CD4-positive, alpha-beta memory T cell (primary cell): ENCODE measurements at regions of chr9 and their contacts with region 1.

Region 1: GRCh38 chr9:113410207-113410864 is at the starts of genes C9orf43 and POLE3:
- DNase-seq: peak; percentile 94 to 97 (median 95)
- H3K4me3 ChIP-seq: peak within 1 kb of the TSS; percentile 65 to 88
- H3K4me3 Mint-ChIP-seq: peak within 1 kb of the TSS; percentile 95 to 100 (median 98)
- H3K27ac ChIP-seq: peak within 1 kb of the TSS; percentile 84
- H3K27ac Mint-ChIP-seq: peak within 1 kb of the TSS; percentile 99 to 100 (median 99)
- H3K4me1 ChIP-seq: peaks cover 27% of the 10 kb centered on the region
- H3K4me1 Mint-ChIP-seq: peaks cover 17 to 44% (median 33%) of the 10 kb centered on the region in 4 donors
- H3K27me3 ChIP-seq: no peaks in the 10 kb centered on the region
- H3K27me3 Mint-ChIP-seq: peaks cover 2 to 3% of the 10 kb centered on the region in 2 donors
- total RNA-seq, gene C9orf43: 0.86 to 0.87 TPM
- total RNA-seq, gene POLE3: 46.9 TPM

Region 2: DNA sequence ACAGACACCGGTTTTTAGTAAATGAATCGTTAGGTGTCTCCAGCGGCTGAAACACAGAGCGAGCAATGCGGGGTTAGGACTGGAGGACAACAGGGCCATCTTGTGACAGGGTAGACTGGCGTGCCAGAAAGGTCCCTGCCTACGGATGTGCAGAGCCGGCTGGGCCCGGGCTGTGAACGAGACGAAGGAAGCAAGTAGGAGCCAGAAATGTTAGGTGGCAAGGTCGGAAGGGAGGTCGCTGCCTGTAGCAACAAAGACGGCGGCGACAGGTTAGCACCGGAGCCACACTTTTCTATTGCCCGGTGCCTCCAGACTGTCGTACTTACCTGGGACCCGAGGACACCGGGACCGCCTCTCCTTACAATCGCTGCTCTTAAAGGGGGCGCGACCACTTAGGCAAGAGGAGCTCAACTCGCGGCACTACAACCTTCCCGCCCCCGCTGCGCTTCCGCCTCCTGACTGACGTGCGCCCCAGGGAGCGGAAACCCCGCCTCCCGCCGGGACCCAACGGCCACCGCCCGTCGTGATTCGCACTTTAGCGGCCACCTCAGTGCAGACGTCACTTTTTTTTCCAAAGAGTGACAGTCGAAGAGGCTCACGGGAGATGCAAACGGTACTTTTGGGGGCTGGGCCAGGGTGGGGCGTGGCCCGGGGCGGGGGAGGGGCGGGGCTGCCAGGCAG is 692.5 kb before region 1 on chr9 and contains the start of gene INIP:
- CTCF ChIA-PET with region 1: no interaction called
- POLR2A ChIA-PET with region 1: no interaction called
- intact Hi-C with region 1: loop called (anchors 2 kb)
- DNase-seq: peak; percentile 97 to 98 (median 98)
- H3K4me3 ChIP-seq: peak within 1 kb of the TSS; percentile 78 to 95
- H3K4me3 Mint-ChIP-seq: peak within 1 kb of the TSS; percentile 93 to 99 (median 98)
- H3K27ac ChIP-seq: peak within 1 kb of the TSS; percentile 88
- H3K27ac Mint-ChIP-seq: peak within 1 kb of the TSS; percentile 94 to 99 (median 99)
- H3K4me1 ChIP-seq: peaks cover 25% of the 10 kb centered on the region
- H3K4me1 Mint-ChIP-seq: peaks cover 15 to 37% (median 26%) of the 10 kb centered on the region in 4 donors
- H3K27me3 ChIP-seq: no peaks in the 10 kb centered on the region
- H3K27me3 Mint-ChIP-seq: no peaks in the 10 kb centered on the region
- total RNA-seq, gene INIP: 25.2 to 33.4 TPM

Region 3: GRCh38 chr9:113221003-113221799 is 189.1 kb before region 1 on chr9 and contains the starts of genes FKBP15 and SLC31A1:
- CTCF ChIA-PET with region 1: no interaction called
- POLR2A ChIA-PET with region 1: interaction called, 16 read pairs
- intact Hi-C with region 1: loop called (anchors 1 kb)
- DNase-seq: peak; percentile 95 to 98 (median 97)
- H3K4me3 ChIP-seq: peak within 1 kb of the TSS; percentile 89 to 91
- H3K4me3 Mint-ChIP-seq: peak within 1 kb of the TSS; percentile 92 to 98 (median 96)
- H3K27ac ChIP-seq: peak within 1 kb of the TSS; percentile 90
- H3K27ac Mint-ChIP-seq: peak within 1 kb of the TSS; percentile 91 to 98 (median 96)
- H3K4me1 ChIP-seq: peaks cover 34% of the 10 kb centered on the region
- H3K4me1 Mint-ChIP-seq: peaks cover 28 to 48% (median 38%) of the 10 kb centered on the region in 4 donors
- H3K27me3 ChIP-seq: no peaks in the 10 kb centered on the region
- H3K27me3 Mint-ChIP-seq: no peaks in the 10 kb centered on the region
- total RNA-seq, gene FKBP15: 34.3 to 34.9 TPM
- total RNA-seq, gene SLC31A1: 4.1 to 4.2 TPM

Region 4: DNA sequence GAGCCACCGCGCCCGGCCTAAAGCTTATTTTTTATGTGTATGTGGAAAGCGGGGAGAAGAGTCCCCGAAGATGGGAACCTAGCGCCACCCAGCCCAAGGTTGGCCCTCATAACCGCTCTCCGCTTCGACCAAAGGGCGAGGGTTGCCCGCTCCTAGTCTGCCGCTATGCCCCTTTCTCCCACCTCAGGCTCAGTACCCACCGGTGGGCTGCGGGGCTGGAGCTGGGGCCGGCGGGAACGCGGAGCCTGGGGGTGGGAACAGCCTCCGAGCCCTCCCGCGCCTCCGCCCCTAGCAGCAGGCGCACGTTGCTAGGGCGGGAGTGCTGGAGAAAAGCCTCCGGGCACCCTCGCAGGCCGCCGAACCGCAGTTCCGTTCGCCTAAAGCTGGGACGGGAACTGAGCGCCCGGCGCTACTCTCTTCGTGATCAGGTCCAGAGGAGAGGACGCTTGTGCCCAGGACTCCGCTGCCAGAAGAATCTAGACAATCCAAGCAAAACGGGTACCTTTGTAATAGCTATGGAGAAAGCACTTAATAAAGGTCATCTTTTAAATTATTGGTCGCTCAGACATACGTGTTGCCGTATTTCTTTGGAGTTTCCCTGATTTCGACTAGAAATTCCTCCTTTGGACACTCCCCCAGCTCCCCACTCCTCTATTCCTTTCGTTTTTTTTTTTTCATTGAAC is 70.2 kb before region 1 on chr9 and contains the start of gene WDR31:
- CTCF ChIA-PET with region 1: no interaction called
- POLR2A ChIA-PET with region 1: interaction called, 15 read pairs
- intact Hi-C with region 1: loop called (anchors 1 kb)
- DNase-seq: peak; percentile 61 to 78 (median 75)
- H3K4me3 ChIP-seq: peak within 1 kb of the TSS; percentile 8 to 79
- H3K4me3 Mint-ChIP-seq: peak within 1 kb of the TSS; percentile 82 to 92 (median 87)
- H3K27ac ChIP-seq: peak within 1 kb of the TSS; percentile 28
- H3K27ac Mint-ChIP-seq: peak within 1 kb of the TSS in 6 of 7 donors; percentile 51 to 73 (median 56)
- H3K4me1 ChIP-seq: peaks cover 10% of the 10 kb centered on the region
- H3K4me1 Mint-ChIP-seq: peaks cover 7 to 23% (median 15%) of the 10 kb centered on the region in 4 donors
- H3K27me3 ChIP-seq: no peaks in the 10 kb centered on the region
- H3K27me3 Mint-ChIP-seq: peaks cover 1 to 4% of the 10 kb centered on the region in 2 donors
- total RNA-seq, gene WDR31: 0.33 to 0.67 TPM

Region 5: GRCh38 chr9:113511856-113512761 is 101.8 kb after region 1 on chr9:
- CTCF ChIA-PET with region 1: interaction called, 3 read pairs
- POLR2A ChIA-PET with region 1: interaction called, 20 read pairs
- intact Hi-C with region 1: loop called (anchors 2 kb)
- DNase-seq: peak; percentile 57 to 90 (median 62)
- H3K4me3 ChIP-seq: peak overlapping the region in 1 of 2 donors; percentile 21
- H3K4me3 Mint-ChIP-seq: peak overlapping the region; percentile 73 to 91 (median 84)
- H3K27ac ChIP-seq: peak overlapping the region; percentile 57
- H3K27ac Mint-ChIP-seq: peak overlapping the region; percentile 89 to 96 (median 93)
- H3K4me1 ChIP-seq: peaks cover 60% of the 10 kb centered on the region
- H3K4me1 Mint-ChIP-seq: peaks cover 39 to 68% (median 54%) of the 10 kb centered on the region in 4 donors
- H3K27me3 ChIP-seq: no peaks in the 10 kb centered on the region
- H3K27me3 Mint-ChIP-seq: no peaks in the 10 kb centered on the region

Region 6: DNA sequence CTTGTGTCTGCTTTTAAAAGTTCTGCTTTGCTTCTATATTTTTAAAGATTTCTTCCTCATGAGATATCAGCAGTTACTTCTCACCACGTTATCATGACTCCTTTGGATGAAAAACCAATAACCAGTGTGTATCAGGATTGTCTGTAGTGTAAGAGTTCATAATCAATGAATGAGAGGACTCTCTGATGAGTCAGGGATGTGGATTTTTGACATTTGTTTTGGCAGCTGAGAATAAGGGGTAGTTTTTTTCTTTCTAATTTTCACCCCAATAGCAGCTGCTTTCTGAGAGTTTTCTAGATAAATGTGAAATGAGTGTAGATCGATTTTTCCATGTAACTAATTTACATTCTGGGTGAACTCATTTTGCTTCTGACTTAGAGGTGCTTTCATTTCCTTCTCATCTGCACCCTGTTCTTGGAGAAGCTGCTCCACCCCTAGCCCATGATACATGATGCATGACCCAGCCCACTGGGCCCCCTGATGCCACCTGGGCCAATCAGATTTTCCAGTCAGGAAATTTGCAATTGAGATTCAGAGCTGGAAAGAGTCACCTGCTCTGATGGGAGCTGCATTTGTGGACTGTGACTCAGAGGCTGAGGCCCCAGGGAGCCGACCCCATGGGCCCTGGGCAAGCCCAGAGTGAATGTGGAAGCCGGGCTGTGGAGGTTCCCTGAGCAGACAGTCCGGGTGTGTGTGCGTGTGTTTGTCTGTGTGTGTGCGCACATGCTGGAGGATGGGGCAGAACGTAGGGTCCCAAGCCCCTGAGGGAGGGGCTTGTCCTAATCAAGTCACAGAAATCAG is 212.5 kb after region 1 on chr9:
- CTCF ChIA-PET with region 1: no interaction called
- POLR2A ChIA-PET with region 1: no interaction called
- intact Hi-C with region 1: no loop called
- DNase-seq: no peak
- H3K4me3 ChIP-seq: no peak overlapping the region
- H3K4me3 Mint-ChIP-seq: no peak overlapping the region
- H3K27ac ChIP-seq: no peak overlapping the region
- H3K27ac Mint-ChIP-seq: no peak overlapping the region
- H3K4me1 ChIP-seq: no peaks in the 10 kb centered on the region
- H3K4me1 Mint-ChIP-seq: no peaks in the 10 kb centered on the region
- H3K27me3 ChIP-seq: no peaks in the 10 kb centered on the region
- H3K27me3 Mint-ChIP-seq: peaks cover 3 to 9% of the 10 kb centered on the region in 2 donors

Region 7: GRCh38 chr9:113798062-113799030 is 388.0 kb after region 1 on chr9:
- CTCF ChIA-PET with region 1: no interaction called
- POLR2A ChIA-PET with region 1: no interaction called
- intact Hi-C with region 1: no loop called
- DNase-seq: no peak
- H3K4me3 ChIP-seq: no peak overlapping the region
- H3K4me3 Mint-ChIP-seq: no peak overlapping the region
- H3K27ac ChIP-seq: no peak overlapping the region
- H3K27ac Mint-ChIP-seq: no peak overlapping the region
- H3K4me1 ChIP-seq: no peaks in the 10 kb centered on the region
- H3K4me1 Mint-ChIP-seq: no peaks in the 10 kb centered on the region
- H3K27me3 ChIP-seq: no peaks in the 10 kb centered on the region
- H3K27me3 Mint-ChIP-seq: peaks cover 5 to 8% of the 10 kb centered on the region in 2 donors